Activated B cell treated with CpG ODN at 0.5 μM for 24 hours (primary cell): ENCODE measurements at regions of chr15 and their contacts with region 1.

Region 1: DNA sequence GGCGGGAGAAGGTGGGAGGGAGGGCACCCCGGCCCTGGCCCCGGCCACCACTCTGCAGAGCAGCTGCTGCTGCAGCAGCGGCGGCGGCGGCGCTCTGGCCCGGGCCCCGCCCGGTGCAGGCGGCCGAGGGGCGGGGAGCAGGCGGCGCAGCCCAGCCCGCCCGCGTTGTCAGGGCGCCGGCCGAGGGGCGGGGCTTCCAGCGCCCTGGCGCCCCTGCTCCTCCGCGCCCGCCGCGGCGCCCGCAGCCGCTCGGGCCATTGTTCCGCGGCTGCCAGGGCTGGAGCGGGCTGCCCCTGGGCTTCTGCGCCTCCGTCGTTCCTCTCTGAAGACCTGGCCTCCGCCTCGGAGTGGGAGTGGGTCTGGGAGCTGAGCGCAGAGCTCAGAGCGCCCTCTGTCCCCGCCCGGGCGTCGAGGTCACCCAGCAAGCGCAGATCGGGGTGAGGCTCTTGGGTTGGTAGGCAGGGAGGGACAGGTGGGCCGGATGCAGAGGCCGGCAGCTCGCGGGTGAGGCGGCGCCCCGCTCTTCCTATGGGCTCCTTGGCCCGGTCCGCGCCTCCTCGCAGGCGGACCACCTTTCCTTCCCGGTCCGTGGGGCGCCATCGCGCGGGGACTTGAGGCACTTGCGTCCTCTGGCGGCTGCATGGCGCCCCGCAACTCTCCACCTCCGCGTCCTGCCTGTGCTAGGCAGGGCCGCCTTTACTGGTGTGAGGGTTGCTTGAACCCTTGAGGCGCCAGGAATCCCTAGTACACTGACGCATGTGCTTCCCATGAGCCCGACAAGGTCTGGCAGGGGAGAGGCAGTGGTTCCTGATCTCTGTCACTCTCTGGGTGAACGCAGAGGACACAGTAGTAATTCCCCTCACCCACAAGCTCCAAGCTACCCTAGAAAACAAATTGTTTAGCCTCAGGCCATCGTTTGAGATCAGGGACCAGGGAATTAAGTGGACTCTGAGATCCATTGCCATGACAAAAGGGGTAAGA is at the start of gene LPCAT4:
- DNase-seq: peak; percentile 87
- ATAC-seq: peak; percentile 86
- H3K4me3 Mint-ChIP-seq: peak within 1 kb of the TSS; percentile 94
- H3K27ac Mint-ChIP-seq: peak within 1 kb of the TSS; percentile 95
- H3K4me1 Mint-ChIP-seq: peaks cover 45% of the 10 kb centered on the region
- H3K27me3 Mint-ChIP-seq: no peaks in the 10 kb centered on the region
- CTCF ChIP-seq: peak; percentile 78
- total RNA-seq, gene LPCAT4: 23.8 and 28.8 TPM in 2 replicates

Region 2: DNA sequence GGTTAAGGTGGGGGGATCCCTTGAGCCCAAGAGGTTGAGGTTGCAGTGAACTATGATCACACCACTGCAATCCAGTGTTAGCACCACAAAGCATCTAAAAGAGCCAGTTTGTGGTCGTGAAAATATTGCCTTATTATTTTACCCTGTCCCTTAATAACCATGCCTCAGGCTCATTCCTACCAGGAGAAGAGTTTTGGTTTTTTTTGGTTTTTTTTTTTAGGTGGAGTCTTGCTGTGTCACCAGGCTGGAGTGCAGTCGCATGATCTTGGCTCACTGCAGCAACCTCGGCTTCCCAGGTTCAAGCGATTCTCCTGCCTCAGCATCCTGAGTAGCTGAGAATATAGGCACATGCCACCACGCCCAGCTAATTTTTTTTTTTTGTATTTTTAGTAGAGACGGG is 310.5 kb before region 1 on chr15:
- CTCF ChIA-PET with region 1: no interaction called
- POLR2A ChIA-PET with region 1: interaction called, 3 read pairs
- intact Hi-C with region 1: loop called (anchors 1 kb)
- DNase-seq: no peak
- ATAC-seq: no peak
- H3K4me3 Mint-ChIP-seq: no peak overlapping the region
- H3K27ac Mint-ChIP-seq: no peak overlapping the region
- H3K4me1 Mint-ChIP-seq: peaks cover 4% of the 10 kb centered on the region
- H3K27me3 Mint-ChIP-seq: no peaks in the 10 kb centered on the region
- CTCF ChIP-seq: no peak

Region 3: GRCh38 chr15:34209421-34210282 is 157.7 kb before region 1 on chr15 and contains the start of gene KATNBL1:
- CTCF ChIA-PET with region 1: interaction called, 3 read pairs
- POLR2A ChIA-PET with region 1: interaction called, 13 read pairs
- intact Hi-C with region 1: loop called (anchors 1 kb)
- DNase-seq: peak; percentile 97
- ATAC-seq: peak; percentile 93
- H3K4me3 Mint-ChIP-seq: peak within 1 kb of the TSS; percentile 89
- H3K27ac Mint-ChIP-seq: peak within 1 kb of the TSS; percentile 82
- H3K4me1 Mint-ChIP-seq: peaks cover 15% of the 10 kb centered on the region
- H3K27me3 Mint-ChIP-seq: no peaks in the 10 kb centered on the region
- CTCF ChIP-seq: no peak
- total RNA-seq, gene KATNBL1: 46.2 and 53.3 TPM in 2 replicates

Region 4: DNA sequence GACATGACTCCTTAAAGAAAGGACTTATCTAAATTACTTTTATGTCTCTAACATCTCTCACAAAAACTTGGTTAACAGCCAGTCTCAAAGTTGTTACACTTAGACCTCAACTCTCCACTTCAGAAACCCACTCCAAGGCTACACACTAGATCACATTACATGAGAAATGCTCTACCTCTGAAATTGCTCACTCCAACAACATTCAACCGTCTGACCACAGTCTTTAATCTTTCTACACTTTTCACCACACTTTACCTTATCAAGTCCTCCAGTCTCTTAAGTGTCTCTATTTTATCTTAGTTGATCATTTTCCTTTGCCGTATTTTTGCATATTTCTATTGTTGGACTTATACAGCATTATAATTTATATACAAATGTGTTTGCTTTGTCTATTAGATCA is 35.6 kb before region 1 on chr15:
- CTCF ChIA-PET with region 1: interaction called, 4 read pairs
- POLR2A ChIA-PET with region 1: interaction called, 64 read pairs
- intact Hi-C with region 1: loop called (anchors 5 kb)
- DNase-seq: no peak
- ATAC-seq: no peak
- H3K4me3 Mint-ChIP-seq: peak overlapping the region; percentile 2
- H3K27ac Mint-ChIP-seq: peak overlapping the region; percentile 99
- H3K4me1 Mint-ChIP-seq: peaks cover 91% of the 10 kb centered on the region
- H3K27me3 Mint-ChIP-seq: no peaks in the 10 kb centered on the region
- CTCF ChIP-seq: no peak

Region 5: GRCh38 chr15:34437687-34438086 is 70.3 kb after region 1 on chr15 and contains the start of gene GOLGA8A:
- CTCF ChIA-PET with region 1: no interaction called
- POLR2A ChIA-PET with region 1: no interaction called
- intact Hi-C with region 1: loop called (anchors 2 kb)
- DNase-seq: peak; percentile 59
- ATAC-seq: peak; percentile 81
- H3K4me3 Mint-ChIP-seq: peak within 1 kb of the TSS; percentile 88
- H3K27ac Mint-ChIP-seq: peak within 1 kb of the TSS; percentile 74
- H3K4me1 Mint-ChIP-seq: peaks cover 12% of the 10 kb centered on the region
- H3K27me3 Mint-ChIP-seq: no peaks in the 10 kb centered on the region
- CTCF ChIP-seq: no peak
- total RNA-seq, gene GOLGA8A: 160 and 171 TPM in 2 replicates

Region 6: DNA sequence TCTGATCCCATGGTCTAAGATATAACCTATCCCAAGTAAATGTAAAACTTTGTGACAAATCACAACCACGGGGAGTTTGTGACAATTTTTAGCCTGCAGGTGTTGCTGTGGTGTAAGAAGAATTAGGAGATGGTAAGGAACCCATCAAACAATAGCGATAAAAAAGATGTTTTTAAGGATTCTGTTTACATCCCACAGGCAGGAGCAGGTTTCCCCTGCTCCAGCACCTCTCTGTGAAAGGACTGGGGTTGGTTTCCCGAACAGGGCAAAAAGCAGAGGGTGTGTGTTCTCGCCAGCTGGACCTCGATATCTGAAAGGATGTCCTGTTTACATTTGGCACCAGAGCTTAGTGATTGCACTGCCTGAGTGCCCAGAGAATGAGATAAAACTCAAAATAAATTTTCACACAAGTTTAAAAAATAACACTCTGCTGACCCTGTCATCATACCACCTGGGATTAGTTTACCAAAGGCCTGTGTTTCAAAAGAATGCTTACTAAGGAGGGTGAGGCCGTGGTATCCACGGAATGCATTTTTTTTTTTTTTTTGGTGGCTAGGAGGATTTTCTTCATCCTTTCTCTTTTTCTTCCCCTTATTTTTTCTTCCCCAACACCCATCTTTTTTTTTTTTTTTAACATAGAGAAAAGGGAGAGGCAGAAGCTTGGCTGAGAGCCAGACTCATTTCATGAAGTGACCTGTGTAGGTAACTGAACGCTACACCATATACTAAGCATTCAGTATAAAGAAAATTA is 1330.3 kb after region 1 on chr15:
- CTCF ChIA-PET with region 1: no interaction called
- POLR2A ChIA-PET with region 1: no interaction called
- intact Hi-C with region 1: no loop called
- DNase-seq: no peak
- ATAC-seq: no peak
- H3K4me3 Mint-ChIP-seq: no peak overlapping the region
- H3K27ac Mint-ChIP-seq: no peak overlapping the region
- H3K4me1 Mint-ChIP-seq: no peaks in the 10 kb centered on the region
- H3K27me3 Mint-ChIP-seq: no peaks in the 10 kb centered on the region
- CTCF ChIP-seq: no peak